CD14-positive monocyte (primary cell): ENCODE measurements at regions of chr7 and their contacts with region 1.

Region 1: GRCh38 chr7:30238721-30239441 is 45.5 kb upstream of the ZNRF2 start:
- DNase-seq: peak; percentile 62 to 81 (median 64)
- H3K4me3 ChIP-seq: no peak overlapping the region
- H3K4me3 Mint-ChIP-seq: no peak overlapping the region
- H3K27ac ChIP-seq: peak overlapping the region in 1 of 2 donors; percentile 71
- H3K27ac Mint-ChIP-seq: peak overlapping the region; percentile 35 to 86 (median 81)
- H3K4me1 ChIP-seq: peaks cover 36 to 38% of the 10 kb centered on the region in 2 donors
- H3K4me1 Mint-ChIP-seq: peaks cover 39% of the 10 kb centered on the region
- H3K27me3 ChIP-seq: no peaks in the 10 kb centered on the region
- H3K27me3 Mint-ChIP-seq: peaks cover 4 to 9% (median 7%) of the 10 kb centered on the region in 3 donors
- CTCF ChIP-seq: no peak

Region 2: GRCh38 chr7:30276203-30276900 is 37.5 kb after region 1 on chr7:
- intact Hi-C with region 1: loop called in 1 of 2 experiments (anchors 5 kb)
- DNase-seq: peak in 2 of 3 donors; percentile 30 to 39
- H3K4me3 ChIP-seq: no peak overlapping the region
- H3K4me3 Mint-ChIP-seq: no peak overlapping the region
- H3K27ac ChIP-seq: no peak overlapping the region
- H3K27ac Mint-ChIP-seq: no peak overlapping the region
- H3K4me1 ChIP-seq: peaks cover 18 to 24% of the 10 kb centered on the region in 2 donors
- H3K4me1 Mint-ChIP-seq: peaks cover 25% of the 10 kb centered on the region
- H3K27me3 ChIP-seq: no peaks in the 10 kb centered on the region
- H3K27me3 Mint-ChIP-seq: peaks cover 0 to 3% (median 1%) of the 10 kb centered on the region in 3 donors
- CTCF ChIP-seq: peak; percentile 39